ENCODE measurements at regions of chr1 and their contacts with region 1.

Region 1: DNA sequence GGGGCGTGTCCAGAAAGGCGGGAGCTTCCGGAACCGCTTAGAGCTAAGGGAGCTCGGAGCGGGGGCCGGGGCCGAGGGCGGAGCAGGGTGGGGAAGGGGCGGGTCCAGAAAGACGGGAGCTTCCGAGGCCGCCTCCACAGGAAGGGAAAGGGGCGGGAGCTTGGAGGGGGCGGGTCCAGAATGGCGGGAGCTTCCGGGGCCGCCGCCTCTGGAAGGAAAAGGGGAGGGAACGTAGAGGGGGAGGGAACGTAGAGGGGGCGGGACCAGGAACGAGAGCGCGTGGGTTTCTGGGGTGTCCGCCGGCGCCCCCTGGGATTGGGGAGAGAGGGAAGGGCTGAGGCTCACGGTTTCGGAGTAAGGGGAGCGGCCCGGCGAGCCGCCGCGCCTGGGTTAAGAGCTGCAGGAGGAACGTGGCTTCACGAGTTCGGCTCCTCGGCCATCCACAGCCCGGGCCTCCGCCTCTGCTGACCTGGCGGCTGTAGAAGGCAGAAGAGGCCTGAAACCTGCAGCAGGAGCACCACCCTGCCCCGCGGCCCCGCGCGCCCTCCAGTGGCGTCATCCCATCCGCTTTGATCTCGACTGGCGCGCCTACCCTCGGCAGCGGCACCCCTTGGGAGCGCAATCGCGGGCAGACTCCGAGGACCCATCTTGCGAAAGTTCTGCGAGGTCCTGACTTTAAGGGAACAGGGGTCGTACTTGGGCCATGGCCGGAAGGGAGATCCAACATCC is 22.9 kb upstream of the HPDL start:
- DNase-seq: peak; percentile 99
- H3K4me3 ChIP-seq: peak overlapping the region; percentile 79
- H3K27ac ChIP-seq: peak overlapping the region; percentile 88
- H3K4me1 ChIP-seq: peaks cover 21% of the 10 kb centered on the region
- H3K27me3 ChIP-seq: no peaks in the 10 kb centered on the region

Region 2: DNA sequence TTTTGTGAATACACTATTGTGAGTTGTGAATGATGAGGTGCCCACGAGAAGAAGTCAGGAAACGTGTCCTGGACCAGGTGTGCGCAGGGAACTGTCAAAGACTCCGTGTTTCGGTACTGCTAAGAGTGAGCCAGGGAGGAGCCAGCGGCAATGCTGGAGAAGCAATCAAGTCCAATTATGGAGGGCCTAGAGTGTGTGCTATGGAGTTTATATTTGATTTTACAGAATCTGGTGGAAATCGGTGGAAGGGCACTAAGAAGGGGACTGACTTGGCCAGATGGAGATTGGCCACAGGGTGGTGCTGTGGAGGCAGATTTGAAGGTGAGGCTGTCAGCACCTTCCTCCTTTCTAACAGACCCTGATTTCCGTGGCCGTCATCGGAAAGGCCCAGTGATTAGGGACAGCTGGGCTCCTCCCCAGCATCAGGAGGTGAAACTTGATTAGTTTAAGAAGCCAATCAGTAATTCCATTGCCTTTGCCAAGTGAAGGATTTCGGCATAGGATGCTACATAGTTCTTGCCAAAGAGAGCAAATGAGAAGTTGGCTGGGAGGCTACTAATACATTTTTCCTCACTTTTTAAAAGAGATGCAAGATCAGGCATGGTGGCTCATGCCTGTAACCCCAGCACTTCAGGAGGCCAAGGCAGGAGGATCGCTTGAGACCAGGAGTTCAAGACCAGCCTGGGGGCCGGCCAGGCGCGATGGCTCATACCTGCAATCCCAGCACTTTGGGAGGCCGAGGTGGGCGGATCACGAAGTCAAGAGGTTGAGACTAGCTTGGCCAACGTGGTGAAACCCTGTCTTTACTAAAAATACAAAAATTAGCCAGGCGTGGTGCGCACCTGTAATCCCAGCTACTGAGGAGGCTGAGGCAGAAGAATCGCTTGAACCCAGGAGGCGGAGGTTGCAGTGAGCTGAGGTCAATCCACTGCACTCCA is 467.7 kb before region 1 on chr1:
- in situ Hi-C with region 1: loop called (anchors 25 kb)
- DNase-seq: peak; percentile 74
- H3K4me3 ChIP-seq: no peak overlapping the region
- H3K27ac ChIP-seq: no peak overlapping the region
- H3K4me1 ChIP-seq: no peaks in the 10 kb centered on the region
- H3K27me3 ChIP-seq: no peaks in the 10 kb centered on the region

Region 3: DNA sequence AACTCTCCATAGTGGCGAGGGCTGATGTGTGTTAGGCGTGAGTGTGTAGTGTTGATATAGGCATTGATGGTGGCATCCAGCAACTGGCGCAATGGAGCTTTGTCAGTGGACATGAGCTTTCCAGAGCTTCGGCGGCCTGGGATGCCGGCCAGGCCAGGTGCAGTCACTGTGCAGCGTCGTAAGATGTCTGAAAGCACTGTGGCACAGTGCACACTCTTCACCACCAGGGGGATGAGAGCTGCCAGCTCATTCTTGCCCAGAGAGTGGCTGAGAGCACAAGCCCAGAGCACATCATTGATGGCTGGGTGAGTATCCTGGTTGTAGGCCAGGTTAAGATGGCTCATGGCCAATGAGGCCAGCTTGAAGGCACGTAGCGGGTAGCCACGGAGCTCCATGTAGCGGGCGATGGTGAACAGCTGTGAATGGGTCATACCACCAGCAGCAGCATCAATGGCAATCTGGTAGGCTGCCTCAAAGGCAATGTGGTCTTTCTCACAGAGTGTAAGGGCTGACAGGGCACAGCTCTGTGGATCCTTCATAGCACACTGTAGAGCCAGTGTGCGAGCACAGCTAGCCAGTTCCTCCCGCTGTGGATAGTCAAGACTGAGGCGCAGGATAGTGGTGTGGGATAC is 285.0 kb before region 1 on chr1:
- in situ Hi-C with region 1: loop called (anchors 5 kb)
- DNase-seq: peak; percentile 78
- H3K4me3 ChIP-seq: no peak overlapping the region
- H3K27ac ChIP-seq: no peak overlapping the region
- H3K4me1 ChIP-seq: 0 out of 2 replicates have a peak, but pooled peaks cover 5% of the 10 kb centered on the region
- H3K27me3 ChIP-seq: no peaks in the 10 kb centered on the region

Region 4: DNA sequence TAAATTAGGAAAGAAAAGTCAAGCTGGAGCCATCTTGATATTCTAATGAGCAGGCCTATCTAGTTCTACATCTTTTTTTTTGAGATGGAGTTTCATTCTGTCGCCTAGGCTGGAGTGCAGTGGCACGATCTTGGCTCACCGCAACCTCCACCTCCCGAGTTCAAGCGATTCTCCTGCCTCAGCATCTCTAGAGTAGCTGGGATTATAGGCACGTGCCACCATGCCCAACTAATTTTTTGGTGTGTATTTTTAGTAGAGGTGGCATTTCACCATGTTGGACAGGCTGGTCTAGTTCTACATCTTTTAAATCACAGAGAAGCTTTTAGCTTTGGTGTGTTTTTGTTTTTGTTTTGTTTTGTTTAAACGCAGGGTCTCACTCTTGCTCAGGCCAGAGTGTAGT is 391.1 kb after region 1 on chr1:
- in situ Hi-C with region 1: no loop called
- DNase-seq: no peak
- H3K4me3 ChIP-seq: no peak overlapping the region
- H3K27ac ChIP-seq: no peak overlapping the region
- H3K4me1 ChIP-seq: no peaks in the 10 kb centered on the region; the same call in 1 of the 2 replicates
- H3K27me3 ChIP-seq: no peaks in the 10 kb centered on the region

Measured in GM23248 (cell line).